ENCODE measurements at regions of chr22 and their contacts with region 1.

Region 1: DNA sequence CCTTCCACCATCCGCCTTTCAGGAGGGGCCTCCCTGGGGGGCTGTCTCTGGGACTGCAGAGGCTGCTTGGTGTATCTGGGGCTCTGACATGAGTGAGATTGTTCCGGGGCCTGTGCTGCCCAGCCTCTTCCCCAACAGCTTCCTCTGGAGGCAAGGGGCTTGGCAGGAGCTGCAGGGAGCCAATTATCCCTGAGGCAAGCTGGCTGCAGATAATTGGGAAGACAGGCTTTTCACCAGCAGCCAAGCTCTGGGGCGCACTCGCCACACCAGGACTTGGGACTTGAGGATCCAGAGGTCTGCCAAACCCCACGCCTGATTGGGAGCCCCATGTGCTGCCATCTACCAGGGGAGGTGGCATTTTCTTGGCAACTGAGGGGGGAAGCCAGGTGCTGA is 15.6 kb upstream of the RTN4R start:
- DNase-seq: no peak
- H3K4me3 ChIP-seq: no peak overlapping the region
- CTCF ChIP-seq: no peak

Region 2: GRCh38 chr22:20268279-20269012 is 15.2 kb before region 1 on chr22 and contains the start of gene RTN4R:
- CTCF ChIA-PET with region 1: interaction called, 10 read pairs
- POLR2A ChIA-PET with region 1: no interaction called
- DNase-seq: no peak
- H3K4me3 ChIP-seq: peak within 1 kb of the TSS; percentile 1; the same call in 1 of the 2 replicates
- CTCF ChIP-seq: peak; percentile 79

Region 3: DNA sequence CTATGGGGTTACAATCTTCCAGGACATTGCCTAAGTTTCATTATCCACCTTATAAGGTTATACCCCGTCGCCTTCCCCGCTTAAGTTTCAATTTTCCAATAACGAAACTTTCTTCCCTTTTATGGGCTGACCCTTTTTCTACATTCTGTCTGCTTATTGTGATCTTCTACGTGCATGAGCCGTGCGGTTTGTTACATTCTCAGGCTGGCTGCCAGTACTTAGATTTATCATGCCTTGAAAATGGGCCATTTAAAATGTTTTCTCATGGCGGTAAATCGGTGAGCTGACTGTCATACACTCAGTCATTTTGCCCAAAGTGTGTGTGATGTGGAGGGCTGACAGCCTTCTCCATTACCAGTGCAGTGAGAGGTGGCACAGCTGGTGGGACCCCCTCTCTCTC is 12.9 kb after region 1 on chr22:
- CTCF ChIA-PET with region 1: interaction called, 18 read pairs
- POLR2A ChIA-PET with region 1: no interaction called
- DNase-seq: no peak
- H3K4me3 ChIP-seq: no peak overlapping the region
- CTCF ChIP-seq: no peak